ENCODE measurements at regions of chr6 and their contacts with region 1.

Region 1: GRCh38 chr6:132279592-132280139 is 121.6 kb downstream of the MOXD1 start:
- DNase-seq: peak; percentile 82

Region 2: GRCh38 chr6:131602781-131603312 is 676.8 kb before region 1 on chr6:
- intact Hi-C with region 1: no loop called
- DNase-seq: no peak

Region 3: GRCh38 chr6:132300323-132300949 is 20.8 kb after region 1 on chr6:
- intact Hi-C with region 1: loop called (anchors 2 kb)
- DNase-seq: no peak